ENCODE measurements at regions of chr1 and their contacts with region 1.

Region 1: GRCh38 chr1:1033009-1033587 is 13.2 kb downstream of the AGRN start:
- DNase-seq: peak; percentile 70 to 76
- ATAC-seq: peak; percentile 76 to 89 (median 84)
- H3K4me3 ChIP-seq: peak overlapping the region in 9 of 10 donors; percentile 35 to 57 (median 49)
- H3K27ac ChIP-seq: no peak overlapping the region
- H3K4me1 ChIP-seq: peaks cover 0 to 42% (median 12%) of the 10 kb centered on the region in 9 donors
- H3K27me3 ChIP-seq: peaks cover 0 to 65% (median 12%) of the 10 kb centered on the region in 7 donors
- CTCF ChIP-seq: peak; percentile 50 to 78 (median 71)

Region 2: DNA sequence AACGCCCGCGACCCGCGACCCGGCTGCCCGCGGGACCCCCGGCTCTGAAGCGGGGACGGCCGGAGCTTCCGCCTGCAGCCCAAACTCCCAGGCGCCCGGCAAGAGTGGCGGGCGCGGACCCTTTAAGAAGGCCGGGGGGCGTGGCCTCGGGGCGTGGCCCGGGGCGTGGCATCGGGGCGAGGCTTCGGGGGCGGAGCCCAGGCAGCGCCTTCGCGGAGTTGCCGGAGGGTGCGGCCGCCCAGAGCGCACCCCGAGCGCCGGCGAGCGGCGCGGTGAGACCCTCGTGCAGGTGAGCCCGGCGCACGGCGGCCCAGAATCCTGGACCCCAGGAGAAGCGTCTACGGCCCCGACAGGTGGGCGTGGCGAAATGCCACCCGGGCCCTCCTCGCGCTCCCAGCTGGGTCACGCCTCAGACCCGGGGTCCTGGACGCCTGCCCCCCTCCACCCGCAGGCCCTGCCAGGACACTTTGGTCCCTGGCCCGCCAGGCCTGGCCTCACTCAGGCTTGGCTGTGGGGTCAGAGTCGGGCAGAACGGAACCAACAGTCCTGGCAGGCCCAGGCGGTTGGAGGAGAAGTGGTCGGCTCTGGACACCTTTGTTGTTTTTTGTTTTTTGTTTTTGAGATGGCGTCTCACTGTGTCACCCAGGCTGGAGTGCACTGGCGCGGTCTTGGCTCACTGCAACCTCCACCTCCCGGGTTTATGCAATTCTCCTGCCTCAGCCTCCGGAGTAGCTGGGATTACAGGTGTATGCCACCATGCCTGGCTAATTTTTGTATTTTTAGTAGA is 26.6 kb after region 1 on chr1:
- intact Hi-C with region 1: loop called in 1 of 10 experiments (anchors 1 kb)
- DNase-seq: peak; percentile 83 to 91
- ATAC-seq: peak; percentile 82 to 93 (median 87)
- H3K4me3 ChIP-seq: peak overlapping the region; percentile 24 to 64 (median 58)
- H3K27ac ChIP-seq: no peak overlapping the region
- H3K4me1 ChIP-seq: peaks cover 4 to 38% (median 28%) of the 10 kb centered on the region in 9 donors
- H3K27me3 ChIP-seq: peaks cover 22 to 80% (median 69%) of the 10 kb centered on the region in 7 donors
- CTCF ChIP-seq: peak in 2 of 9 donors; percentile 2 to 3

Region 3: DNA sequence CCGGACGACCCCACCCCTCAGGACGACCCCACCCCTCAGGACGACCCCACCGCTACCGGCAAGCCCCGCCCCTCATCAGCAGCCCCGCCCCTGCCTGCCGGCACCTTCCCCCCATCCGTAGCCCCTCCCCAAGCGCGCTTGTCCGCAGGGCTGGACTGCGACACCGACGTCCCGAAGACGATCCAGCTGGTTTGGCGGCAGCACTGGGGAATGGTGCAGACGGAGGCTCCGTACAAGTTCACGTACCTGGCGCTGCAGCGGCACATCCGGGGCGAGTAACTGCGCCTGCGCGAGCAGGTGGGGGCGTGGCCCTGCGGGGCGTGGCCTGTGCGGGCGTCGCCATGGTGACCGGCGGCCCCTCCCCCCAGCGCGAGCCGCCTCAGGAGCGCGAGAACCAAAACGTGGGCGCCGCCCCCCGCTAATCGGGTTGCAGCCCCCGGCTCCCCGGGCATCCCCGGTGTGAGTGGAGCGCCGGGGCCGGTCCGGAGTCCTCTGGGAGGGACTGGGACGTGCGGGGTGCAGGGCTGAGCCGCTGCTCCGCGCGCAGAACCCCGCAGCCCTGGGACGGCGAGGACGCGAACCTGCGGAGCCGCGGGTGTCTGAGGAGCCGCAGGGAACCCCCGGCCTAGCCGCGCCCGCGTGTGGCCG is 36.1 kb after region 1 on chr1:
- intact Hi-C with region 1: loop called in 1 of 10 experiments (anchors 5 kb)
- DNase-seq: peak; percentile 38 to 77
- ATAC-seq: peak; percentile 45 to 72 (median 58)
- H3K4me3 ChIP-seq: peak overlapping the region in 9 of 10 donors; percentile 35 to 57 (median 47)
- H3K27ac ChIP-seq: no peak overlapping the region
- H3K4me1 ChIP-seq: peaks cover 4 to 23% (median 15%) of the 10 kb centered on the region in 9 donors
- H3K27me3 ChIP-seq: peaks cover 26 to 76% (median 66%) of the 10 kb centered on the region in 7 donors
- CTCF ChIP-seq: no peak

Region 4: GRCh38 chr1:1173793-1174415 is 140.8 kb after region 1 on chr1 and contains the start of gene TTLL10:
- intact Hi-C with region 1: no loop called
- DNase-seq: peak in 1 of 2 donors; percentile 15
- ATAC-seq: peak in 3 of 8 donors; percentile 22 to 36 (median 35)
- H3K4me3 ChIP-seq: no peak within 1 kb of the TSS
- H3K27ac ChIP-seq: no peak within 1 kb of the TSS
- H3K4me1 ChIP-seq: peaks cover 0 to 10% (median 4%) of the 10 kb centered on the region in 9 donors
- H3K27me3 ChIP-seq: peaks cover 13 to 96% (median 87%) of the 10 kb centered on the region in 7 donors
- CTCF ChIP-seq: no peak
- total RNA-seq, gene TTLL10: 0.11 to 0.53 (median 0.26) TPM in 7 of 10 donors, not detected in the others

Region 5: DNA sequence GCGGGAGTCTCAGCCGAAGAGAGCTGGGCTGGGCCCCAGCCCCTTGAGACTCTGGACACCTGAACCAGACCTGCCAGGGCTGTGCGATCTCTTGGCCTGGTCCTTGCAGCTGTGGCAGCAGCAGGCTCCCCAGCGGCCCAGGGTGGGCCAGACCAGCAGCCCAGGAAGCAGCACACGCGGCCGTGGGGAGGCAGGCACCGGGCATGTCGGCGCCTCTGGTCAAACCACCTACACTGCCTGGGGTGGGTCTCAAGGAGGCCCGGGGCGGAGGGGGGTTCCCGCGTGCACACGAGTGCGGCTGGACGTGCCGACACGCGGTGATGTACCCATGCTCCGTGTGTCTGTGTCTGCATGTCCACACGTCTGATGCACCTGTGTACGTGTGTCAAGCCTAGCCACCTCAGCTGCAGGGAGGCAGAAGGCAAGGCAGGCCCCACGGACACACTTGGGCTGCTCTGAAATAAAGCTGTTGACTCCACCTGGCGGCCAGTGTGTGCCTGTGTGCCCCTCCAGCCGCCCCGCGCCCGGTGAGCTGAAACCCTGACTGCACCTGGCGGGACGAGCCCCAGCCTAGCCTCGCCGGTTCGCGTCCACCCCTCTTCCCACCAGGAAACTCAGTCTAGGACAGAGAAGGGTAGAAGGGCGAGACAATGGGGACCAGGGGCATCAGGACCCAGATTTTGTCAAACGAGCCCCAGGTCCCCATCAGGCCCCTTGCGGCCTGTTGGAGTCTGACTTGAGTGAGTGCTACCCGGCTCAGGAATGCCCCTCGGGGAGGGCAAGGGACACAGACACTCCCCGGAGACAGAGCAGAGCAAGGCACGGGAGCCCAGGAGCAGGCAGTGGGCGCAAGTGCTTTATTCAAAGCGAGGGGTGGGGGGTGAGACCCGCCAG is 258.7 kb after region 1 on chr1:
- intact Hi-C with region 1: loop called in 2 of 10 experiments (anchors 10 kb)
- DNase-seq: peak; percentile 56 to 64
- ATAC-seq: peak; percentile 54 to 83 (median 68)
- H3K4me3 ChIP-seq: no peak overlapping the region
- H3K27ac ChIP-seq: no peak overlapping the region
- H3K4me1 ChIP-seq: peaks cover 0 to 13% (median 7%) of the 10 kb centered on the region in 9 donors
- H3K27me3 ChIP-seq: peaks cover 0 to 12% (median 8%) of the 10 kb centered on the region in 7 donors
- CTCF ChIP-seq: peak; percentile 33 to 73 (median 65)

Region 6: DNA sequence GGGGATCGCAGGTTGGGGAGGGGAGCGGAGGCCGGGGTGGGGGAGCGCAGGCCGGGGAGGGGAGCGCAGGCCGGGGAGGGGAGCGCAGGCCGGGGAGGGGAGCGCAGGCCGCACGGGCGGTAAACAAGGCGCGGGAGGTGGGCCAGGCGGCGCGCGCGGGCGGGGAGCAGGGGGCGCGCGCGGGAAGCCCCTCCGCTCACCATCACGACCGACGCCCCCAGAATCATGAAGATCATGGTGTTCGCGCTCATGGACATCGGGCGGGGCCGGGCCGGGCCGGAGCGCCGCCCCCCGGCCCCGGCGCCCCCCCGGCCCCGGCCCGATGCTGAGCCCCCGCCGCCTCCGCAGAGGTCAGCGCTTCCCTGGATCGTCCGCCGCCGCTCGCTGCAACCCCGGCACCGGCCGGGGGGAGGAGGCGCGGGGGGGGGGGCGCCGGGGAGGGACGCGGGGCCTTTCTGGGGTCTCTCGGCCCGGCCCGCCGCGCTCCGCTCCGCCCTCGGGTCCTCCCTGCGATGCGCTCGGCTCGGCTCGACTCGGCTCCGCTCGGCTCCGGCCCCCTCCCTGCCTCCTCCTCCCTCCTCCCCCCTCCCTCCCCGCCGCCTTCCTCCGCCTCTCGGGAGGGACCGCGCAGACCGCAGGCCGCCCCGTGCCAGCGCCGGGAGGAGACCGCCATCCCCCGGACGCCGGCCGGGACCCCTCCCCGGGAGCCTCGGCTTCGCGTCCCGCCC is 507.2 kb after region 1 on chr1 and contains the start of gene TMEM240:
- intact Hi-C with region 1: no loop called
- DNase-seq: peak; percentile 87 to 88
- ATAC-seq: peak; percentile 46 to 88 (median 67)
- H3K4me3 ChIP-seq: peak within 1 kb of the TSS; percentile 8 to 70 (median 58)
- H3K27ac ChIP-seq: peak within 1 kb of the TSS in 9 of 10 donors; percentile 69 to 87 (median 79)
- H3K4me1 ChIP-seq: peaks cover 3 to 48% (median 27%) of the 10 kb centered on the region in 9 donors
- H3K27me3 ChIP-seq: peaks cover 0 to 15% (median 0%) of the 10 kb centered on the region in 7 donors
- CTCF ChIP-seq: no peak
- total RNA-seq, gene TMEM240: 3.2 to 6.2 (median 3.7) TPM